ENCODE measurements at regions of chr17 and their contacts with region 1.

Region 1: DNA sequence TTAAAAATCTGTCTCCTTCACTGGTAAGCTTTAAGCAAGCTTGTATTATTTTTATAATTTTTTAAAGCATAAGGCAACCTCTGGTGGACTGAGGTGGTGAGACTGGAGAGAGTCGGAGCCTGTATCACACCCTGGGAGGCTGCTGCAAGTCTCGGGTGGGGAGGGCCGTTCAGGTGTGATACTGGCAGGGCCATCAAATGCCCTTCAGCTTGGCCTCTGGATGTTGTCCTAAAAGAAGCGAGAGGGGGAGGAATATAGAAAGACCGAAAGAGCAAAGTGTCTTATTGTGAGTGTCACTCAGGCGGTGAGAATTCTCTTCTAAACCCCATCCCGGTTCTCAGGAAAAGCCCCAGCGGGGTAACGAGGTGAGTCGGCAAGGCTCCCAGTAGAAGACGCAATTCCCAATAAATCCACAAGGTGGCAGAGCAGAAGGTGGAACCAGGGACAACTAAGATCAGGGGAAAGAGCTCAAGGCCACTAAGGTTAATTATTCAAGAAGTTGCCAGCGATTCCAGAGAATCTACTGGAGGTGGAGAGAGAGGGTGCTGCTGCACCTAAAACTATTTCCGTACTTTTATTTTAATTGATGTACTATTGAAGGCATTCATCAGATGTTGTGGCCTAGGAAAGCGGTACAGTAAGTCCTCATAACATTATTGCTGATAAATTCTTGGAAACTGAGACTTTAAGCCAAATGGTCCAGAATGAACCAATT is 14.1 kb downstream of the C17orf67 start:
- DNase-seq: peak; percentile 59 to 71 (median 70)
- H3K4me3 ChIP-seq: no peak overlapping the region
- H3K4me3 Mint-ChIP-seq: no peak overlapping the region
- H3K27ac ChIP-seq: no peak overlapping the region
- H3K27ac Mint-ChIP-seq: no peak overlapping the region
- H3K4me1 ChIP-seq: no peaks in the 10 kb centered on the region
- H3K4me1 Mint-ChIP-seq: peaks cover 4% of the 10 kb centered on the region
- H3K27me3 ChIP-seq: no peaks in the 10 kb centered on the region
- H3K27me3 Mint-ChIP-seq: peaks cover 0 to 8% (median 6%) of the 10 kb centered on the region in 3 donors
- CTCF ChIP-seq: peak; percentile 92

Region 2: DNA sequence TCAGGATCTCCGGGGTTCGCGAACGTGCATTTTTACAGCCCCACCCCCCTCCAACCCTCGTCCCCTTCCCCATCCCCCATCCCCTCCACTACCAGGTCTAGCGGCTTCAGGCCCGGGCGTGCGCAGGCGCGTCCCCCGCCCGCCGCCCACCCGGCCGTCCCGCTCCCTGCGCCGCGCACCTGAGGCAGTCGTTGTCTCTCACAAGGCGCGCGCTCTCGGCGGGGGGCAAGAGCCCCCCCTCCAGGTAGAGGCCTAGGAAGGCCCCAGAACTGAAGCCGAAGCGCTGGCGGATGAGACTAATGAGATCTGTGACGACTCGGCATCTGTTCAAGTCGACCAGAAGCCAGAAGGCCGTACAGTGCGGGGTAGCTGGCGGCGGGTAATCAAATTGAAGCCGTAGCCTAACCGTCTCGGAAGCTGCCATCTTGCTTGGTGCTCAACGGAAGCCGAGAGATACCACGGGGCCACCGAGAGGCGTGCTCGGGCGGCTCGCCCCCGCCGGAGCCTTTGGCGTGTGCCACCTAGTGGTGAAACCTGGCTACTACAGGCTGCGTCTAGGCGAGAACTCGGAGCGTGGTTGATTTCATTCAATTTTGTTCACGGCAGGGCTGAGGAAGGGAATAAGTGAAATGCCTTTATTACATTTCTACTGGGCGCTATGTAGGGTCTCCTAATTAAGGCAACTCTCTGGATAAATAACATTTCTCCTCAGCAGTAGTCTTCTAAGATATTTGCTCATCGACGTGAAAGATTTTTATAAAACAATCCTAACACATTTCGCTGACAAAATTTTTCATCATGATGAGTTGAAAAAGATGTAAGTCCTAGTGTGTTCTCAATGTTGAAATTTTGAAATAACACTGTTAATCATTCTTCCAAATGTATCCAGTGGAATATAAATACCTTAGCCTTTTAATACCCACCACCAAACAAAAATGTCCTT is 141.3 kb after region 1 on chr17 and contains the start of gene COIL:
- intact Hi-C with region 1: loop called in 1 of 2 experiments (anchors 5 kb)
- DNase-seq: peak; percentile 85 to 90 (median 86)
- H3K4me3 ChIP-seq: peak within 1 kb of the TSS; percentile 81 to 98 (median 96)
- H3K4me3 Mint-ChIP-seq: peak within 1 kb of the TSS; percentile 77 to 84
- H3K27ac ChIP-seq: peak within 1 kb of the TSS; percentile 70 to 95
- H3K27ac Mint-ChIP-seq: peak within 1 kb of the TSS; percentile 70 to 92 (median 88)
- H3K4me1 ChIP-seq: peaks cover 10% of the 10 kb centered on the region in 2 donors
- H3K4me1 Mint-ChIP-seq: peaks cover 12% of the 10 kb centered on the region
- H3K27me3 ChIP-seq: no peaks in the 10 kb centered on the region
- H3K27me3 Mint-ChIP-seq: peaks cover 0 to 2% (median 1%) of the 10 kb centered on the region in 3 donors
- CTCF ChIP-seq: peak; percentile 99
- polyA plus RNA-seq, gene COIL: 3.0 to 6.6 (median 5.3) TPM